Activated T-helper 1 cell treated with anti-CD3 and anti-CD28 coated beads, Interleukin-12 subunit alpha, Interleukin-12 subunit beta, Interleukin-2, Interleukin-4 antibody, amounts not matched to agents 30 ng/mL and 10 ng/mL and 1 ng/mL, durations not matched to agents 14 hours and 24 hours and 36 hours (primary cell): ENCODE measurements at regions of chr17 and their contacts with region 1.

Region 1: GRCh38 chr17:65027305-65027704 is 29.2 kb downstream of the GNA13 start:
- DNase-seq: peak; percentile 31
- H3K4me3 Mint-ChIP-seq: peak overlapping the region; percentile 60
- H3K27ac Mint-ChIP-seq: peak overlapping the region; percentile 91
- H3K4me1 Mint-ChIP-seq: peaks cover 77% of the 10 kb centered on the region
- H3K27me3 Mint-ChIP-seq: no peaks in the 10 kb centered on the region

Region 2: GRCh38 chr17:64975329-64976087 is 51.8 kb before region 1 on chr17:
- intact Hi-C with region 1: loop called (anchors 1 kb)
- DNase-seq: peak; percentile 98
- H3K4me3 Mint-ChIP-seq: peak overlapping the region; percentile 74
- H3K27ac Mint-ChIP-seq: peak overlapping the region; percentile 99
- H3K4me1 Mint-ChIP-seq: peaks cover 60% of the 10 kb centered on the region
- H3K27me3 Mint-ChIP-seq: no peaks in the 10 kb centered on the region

Region 3: DNA sequence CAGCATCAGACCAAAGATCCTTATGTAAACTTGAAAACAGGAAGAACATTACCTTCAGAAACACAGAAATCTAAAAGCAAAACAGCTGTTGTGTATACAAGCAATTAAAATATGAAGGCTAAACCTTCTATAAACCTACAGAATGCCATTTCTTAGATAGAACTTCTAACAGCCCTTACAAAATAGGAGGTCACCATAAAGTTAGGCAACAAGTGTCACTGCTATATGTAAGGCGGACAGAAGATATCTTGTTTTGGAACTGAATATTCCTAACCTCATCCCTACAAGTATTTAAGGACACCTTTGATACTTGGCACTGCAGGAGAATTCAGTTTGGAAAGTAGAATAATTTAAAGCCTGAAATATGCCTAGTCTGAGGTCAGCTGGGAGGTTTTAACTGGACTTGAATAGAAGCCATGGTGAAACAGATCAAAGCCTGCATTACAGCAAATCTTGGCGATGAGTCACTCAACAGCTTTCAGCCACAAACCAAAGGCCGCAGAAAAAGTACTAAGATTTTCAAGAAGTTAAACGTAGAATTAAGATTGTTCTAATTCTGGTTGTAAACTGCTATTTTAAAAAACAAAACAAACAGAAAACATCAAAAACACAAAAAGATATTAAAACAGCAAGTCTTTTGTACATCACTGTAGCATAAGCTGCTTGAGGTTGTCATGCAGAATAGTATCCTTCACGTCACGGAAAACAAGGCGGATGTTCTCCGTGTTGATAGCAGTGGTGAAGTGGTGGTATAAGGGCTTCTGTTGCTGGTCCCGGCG is 13.5 kb before region 1 on chr17:
- intact Hi-C with region 1: loop called (anchors 1 kb)
- DNase-seq: peak; percentile 13
- H3K4me3 Mint-ChIP-seq: no peak overlapping the region
- H3K27ac Mint-ChIP-seq: peak overlapping the region; percentile 43
- H3K4me1 Mint-ChIP-seq: peaks cover 65% of the 10 kb centered on the region
- H3K27me3 Mint-ChIP-seq: no peaks in the 10 kb centered on the region

Region 4: GRCh38 chr17:65039336-65039988 is 12.2 kb after region 1 on chr17:
- intact Hi-C with region 1: loop called (anchors 1 kb)
- DNase-seq: peak; percentile 46
- H3K4me3 Mint-ChIP-seq: peak overlapping the region; percentile 58
- H3K27ac Mint-ChIP-seq: peak overlapping the region; percentile 82
- H3K4me1 Mint-ChIP-seq: peaks cover 78% of the 10 kb centered on the region
- H3K27me3 Mint-ChIP-seq: no peaks in the 10 kb centered on the region

Region 5: GRCh38 chr17:65055348-65056261 is 28.3 kb after region 1 on chr17:
- intact Hi-C with region 1: loop called (anchors 1 kb)
- DNase-seq: peak; percentile 53
- H3K4me3 Mint-ChIP-seq: peak overlapping the region; percentile 94
- H3K27ac Mint-ChIP-seq: peak overlapping the region; percentile 93
- H3K4me1 Mint-ChIP-seq: peaks cover 32% of the 10 kb centered on the region
- H3K27me3 Mint-ChIP-seq: peaks cover 5% of the 10 kb centered on the region

Region 6: GRCh38 chr17:65065906-65066305 is 38.6 kb after region 1 on chr17:
- intact Hi-C with region 1: no loop called
- DNase-seq: no peak
- H3K4me3 Mint-ChIP-seq: no peak overlapping the region
- H3K27ac Mint-ChIP-seq: no peak overlapping the region
- H3K4me1 Mint-ChIP-seq: no peaks in the 10 kb centered on the region
- H3K27me3 Mint-ChIP-seq: peaks cover 18% of the 10 kb centered on the region

Region 7: DNA sequence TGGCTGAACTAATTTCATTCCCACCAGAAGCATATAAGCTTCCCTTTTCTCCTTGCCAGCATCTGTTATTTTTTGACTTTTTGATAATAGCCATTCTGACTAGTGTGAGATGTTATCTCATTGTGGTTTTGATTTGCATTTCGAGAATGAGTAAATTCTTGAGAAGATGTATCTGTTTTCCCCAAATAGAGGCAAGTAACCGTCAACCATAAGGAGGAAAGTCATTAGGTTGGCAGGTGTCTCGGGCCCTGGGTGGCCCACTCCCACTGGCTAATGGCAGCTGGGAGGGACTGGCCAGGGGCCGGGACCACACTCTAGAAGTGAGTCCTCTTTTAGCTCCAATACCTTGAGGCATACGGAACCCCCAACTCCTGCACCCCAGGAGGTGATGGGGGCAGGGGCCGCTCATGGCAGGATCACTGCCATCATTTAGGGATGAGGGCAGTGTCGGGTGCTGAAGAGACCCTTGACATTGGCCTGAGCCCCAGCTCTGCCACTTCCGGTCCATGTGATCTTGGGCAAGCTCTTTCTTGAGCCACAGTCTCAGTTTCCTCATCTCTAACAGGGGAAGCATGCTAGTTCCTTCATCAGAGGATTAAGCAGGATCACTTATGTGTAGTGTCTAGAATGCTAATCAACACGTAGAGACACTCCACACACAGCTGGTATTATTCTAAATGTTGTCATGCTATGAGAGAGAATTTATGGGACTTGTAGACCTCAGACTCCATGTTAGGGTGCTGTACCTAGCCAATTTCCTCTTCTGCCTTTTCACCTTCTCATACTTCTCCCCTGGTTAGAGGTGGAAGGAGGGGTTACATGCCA is 154.1 kb after region 1 on chr17:
- intact Hi-C with region 1: loop called (anchors 5 kb)
- DNase-seq: peak; percentile 32
- H3K4me3 Mint-ChIP-seq: peak overlapping the region; percentile 31
- H3K27ac Mint-ChIP-seq: peak overlapping the region; percentile 78
- H3K4me1 Mint-ChIP-seq: peaks cover 79% of the 10 kb centered on the region
- H3K27me3 Mint-ChIP-seq: peaks cover 11% of the 10 kb centered on the region

Region 8: GRCh38 chr17:65198653-65199382 is 171.5 kb after region 1 on chr17:
- intact Hi-C with region 1: loop called (anchors 2 kb)
- DNase-seq: no peak
- H3K4me3 Mint-ChIP-seq: no peak overlapping the region
- H3K27ac Mint-ChIP-seq: peak overlapping the region; percentile 9
- H3K4me1 Mint-ChIP-seq: peaks cover 14% of the 10 kb centered on the region
- H3K27me3 Mint-ChIP-seq: peaks cover 6% of the 10 kb centered on the region